Activated CD4-positive, alpha-beta T cell treated with anti-CD3 and anti-CD28 coated beads for 36 hours (primary cell): ENCODE measurements at regions of chr12 and their contacts with region 1.

Region 1: GRCh38 chr12:70576346-70577282 is 60.6 kb downstream of the PTPRB start:
- DNase-seq: no peak
- ATAC-seq: no peak
- H3K4me3 Mint-ChIP-seq: no peak overlapping the region
- H3K27ac Mint-ChIP-seq: no peak overlapping the region
- H3K4me1 Mint-ChIP-seq: no peaks in the 10 kb centered on the region
- H3K27me3 Mint-ChIP-seq: peaks cover 2% of the 10 kb centered on the region

Region 2: GRCh38 chr12:69879041-69879960 is 697.3 kb before region 1 on chr12:
- CTCF ChIA-PET with region 1: interaction called, 14 read pairs
- POLR2A ChIA-PET with region 1: no interaction called
- intact Hi-C with region 1: loop called (anchors 1 kb)
- DNase-seq: peak; percentile 82
- ATAC-seq: peak; percentile 93
- H3K4me3 Mint-ChIP-seq: no peak overlapping the region
- H3K27ac Mint-ChIP-seq: no peak overlapping the region
- H3K4me1 Mint-ChIP-seq: peaks cover 6% of the 10 kb centered on the region
- H3K27me3 Mint-ChIP-seq: peaks cover 17% of the 10 kb centered on the region

Region 3: DNA sequence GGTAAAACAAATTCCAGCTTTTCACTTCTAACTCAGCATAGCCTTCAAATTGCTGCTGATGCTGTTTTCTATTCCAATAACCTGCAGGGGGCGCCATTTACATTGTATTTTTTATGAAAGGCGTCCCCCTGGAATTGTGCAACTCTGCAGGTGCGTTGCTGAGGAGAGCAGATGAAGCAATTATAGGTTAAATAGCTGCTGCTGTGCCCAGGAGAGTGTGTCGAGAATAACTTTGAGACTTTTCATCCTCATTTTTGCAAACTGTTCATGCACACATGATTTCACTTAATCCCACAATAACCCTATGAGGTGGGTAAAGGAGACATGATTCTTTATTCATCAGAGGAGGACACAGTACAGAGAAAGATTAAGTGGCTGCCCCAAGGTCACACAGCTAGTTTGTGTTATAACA is 675.9 kb before region 1 on chr12:
- CTCF ChIA-PET with region 1: interaction called, 42 read pairs
- POLR2A ChIA-PET with region 1: no interaction called
- intact Hi-C with region 1: loop called (anchors 1 kb)
- DNase-seq: peak; percentile 76
- ATAC-seq: peak; percentile 30
- H3K4me3 Mint-ChIP-seq: no peak overlapping the region
- H3K27ac Mint-ChIP-seq: no peak overlapping the region
- H3K4me1 Mint-ChIP-seq: peaks cover 2% of the 10 kb centered on the region
- H3K27me3 Mint-ChIP-seq: no peaks in the 10 kb centered on the region

Region 4: DNA sequence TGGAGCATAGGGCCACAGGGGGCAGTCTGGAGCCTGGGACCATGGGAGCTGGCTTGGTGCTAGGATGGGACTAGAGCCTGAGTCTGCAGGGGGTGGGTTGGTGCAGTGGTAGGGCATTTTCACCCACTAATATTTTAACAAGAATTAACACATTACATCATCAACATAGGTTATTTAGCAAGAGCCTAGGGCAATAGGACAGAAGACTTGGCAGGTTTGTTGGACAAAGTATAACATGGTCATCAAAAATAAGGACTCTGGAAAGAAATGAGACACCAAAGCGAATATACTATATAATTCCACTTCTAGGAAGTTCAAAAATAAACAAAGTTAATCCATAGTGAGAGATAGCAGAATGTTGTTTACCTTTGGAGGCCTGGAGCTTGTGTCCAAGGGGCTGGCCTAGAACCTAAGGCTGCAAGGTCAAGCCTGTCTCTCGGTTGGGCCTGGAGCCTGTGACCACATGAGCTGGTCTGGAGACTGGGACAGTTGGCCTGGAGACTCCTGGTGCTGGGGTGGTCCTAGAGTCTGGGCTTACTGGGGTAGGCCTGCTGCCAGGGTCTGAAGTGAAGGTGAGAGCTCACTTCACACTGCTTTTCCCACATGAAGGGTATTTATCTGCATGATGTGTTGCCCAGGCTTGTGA is 361.5 kb before region 1 on chr12:
- CTCF ChIA-PET with region 1: interaction called, 3 read pairs
- POLR2A ChIA-PET with region 1: no interaction called
- intact Hi-C with region 1: loop called in 1 of 2 experiments (anchors 5 kb)
- DNase-seq: no peak
- ATAC-seq: no peak
- H3K4me3 Mint-ChIP-seq: no peak overlapping the region
- H3K27ac Mint-ChIP-seq: no peak overlapping the region
- H3K4me1 Mint-ChIP-seq: peaks cover 2% of the 10 kb centered on the region
- H3K27me3 Mint-ChIP-seq: no peaks in the 10 kb centered on the region

Region 5: GRCh38 chr12:70449074-70449761 is 127.4 kb before region 1 on chr12:
- CTCF ChIA-PET with region 1: no interaction called
- POLR2A ChIA-PET with region 1: no interaction called
- intact Hi-C with region 1: no loop called
- DNase-seq: no peak
- ATAC-seq: no peak
- H3K4me3 Mint-ChIP-seq: no peak overlapping the region
- H3K27ac Mint-ChIP-seq: no peak overlapping the region
- H3K4me1 Mint-ChIP-seq: no peaks in the 10 kb centered on the region
- H3K27me3 Mint-ChIP-seq: peaks cover 2% of the 10 kb centered on the region